ENCODE measurements at regions of chr2 and their contacts with region 1.

Region 1: GRCh38 chr2:105749583-105750400 is 5.1 kb downstream of the NCK2 start:
- DNase-seq: peak; percentile 57
- H3K4me3 Mint-ChIP-seq: peak overlapping the region; percentile 95
- H3K27ac Mint-ChIP-seq: peak overlapping the region; percentile 90
- H3K4me1 Mint-ChIP-seq: peaks cover 82% of the 10 kb centered on the region
- H3K27me3 Mint-ChIP-seq: no peaks in the 10 kb centered on the region

Region 2: GRCh38 chr2:105681927-105682326 is 67.9 kb before region 1 on chr2:
- CTCF ChIA-PET with region 1: no interaction called
- POLR2A ChIA-PET with region 1: no interaction called
- DNase-seq: no peak
- H3K4me3 Mint-ChIP-seq: no peak overlapping the region
- H3K27ac Mint-ChIP-seq: no peak overlapping the region
- H3K4me1 Mint-ChIP-seq: peaks cover 11% of the 10 kb centered on the region
- H3K27me3 Mint-ChIP-seq: peaks cover 4% of the 10 kb centered on the region

Region 3: DNA sequence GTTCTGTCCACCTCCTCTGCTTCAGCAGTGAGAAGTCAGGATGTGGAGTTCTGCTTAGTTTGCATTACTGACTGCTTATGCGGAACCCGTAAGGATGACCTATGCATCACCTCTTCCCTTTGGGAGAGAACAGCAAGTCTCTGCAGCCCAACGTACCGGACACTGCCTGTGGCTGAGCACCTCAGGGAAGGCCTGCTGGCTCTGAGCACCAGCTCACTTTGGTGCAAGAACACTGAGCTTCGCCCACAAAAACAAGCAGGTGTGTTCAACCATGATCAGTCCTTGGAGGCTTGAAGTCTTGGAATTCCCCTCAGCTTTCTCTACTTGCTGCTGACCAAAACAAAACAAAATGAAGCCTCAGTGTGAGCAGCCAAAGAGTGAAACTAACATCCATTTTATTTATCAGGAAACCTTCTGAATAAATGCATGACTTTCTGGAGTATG is 57.8 kb before region 1 on chr2:
- CTCF ChIA-PET with region 1: no interaction called
- POLR2A ChIA-PET with region 1: no interaction called
- DNase-seq: no peak
- H3K4me3 Mint-ChIP-seq: no peak overlapping the region
- H3K27ac Mint-ChIP-seq: no peak overlapping the region
- H3K4me1 Mint-ChIP-seq: no peaks in the 10 kb centered on the region
- H3K27me3 Mint-ChIP-seq: peaks cover 3% of the 10 kb centered on the region

Region 4: GRCh38 chr2:105761931-105762515 is 12.2 kb after region 1 on chr2:
- CTCF ChIA-PET with region 1: interaction called, 3 read pairs
- POLR2A ChIA-PET with region 1: interaction called, 120 read pairs
- DNase-seq: no peak
- H3K4me3 Mint-ChIP-seq: peak overlapping the region; percentile 49
- H3K27ac Mint-ChIP-seq: peak overlapping the region; percentile 60
- H3K4me1 Mint-ChIP-seq: peaks cover 90% of the 10 kb centered on the region
- H3K27me3 Mint-ChIP-seq: no peaks in the 10 kb centered on the region

Region 5: GRCh38 chr2:105769504-105769903 is 19.7 kb after region 1 on chr2:
- CTCF ChIA-PET with region 1: interaction called, 4 read pairs
- POLR2A ChIA-PET with region 1: interaction called, 120 read pairs
- DNase-seq: no peak
- H3K4me3 Mint-ChIP-seq: no peak overlapping the region
- H3K27ac Mint-ChIP-seq: peak overlapping the region; percentile 76
- H3K4me1 Mint-ChIP-seq: peaks cover 95% of the 10 kb centered on the region
- H3K27me3 Mint-ChIP-seq: no peaks in the 10 kb centered on the region

Region 6: GRCh38 chr2:105775809-105776559 is 26.2 kb after region 1 on chr2:
- CTCF ChIA-PET with region 1: interaction called, 7 read pairs
- POLR2A ChIA-PET with region 1: interaction called, 49 read pairs
- DNase-seq: peak; percentile 50
- H3K4me3 Mint-ChIP-seq: peak overlapping the region; percentile 69
- H3K27ac Mint-ChIP-seq: peak overlapping the region; percentile 92
- H3K4me1 Mint-ChIP-seq: peaks cover 92% of the 10 kb centered on the region
- H3K27me3 Mint-ChIP-seq: no peaks in the 10 kb centered on the region

Measured in activated CD4-positive, alpha-beta memory T cell treated with anti-CD3 and anti-CD28 coated beads, Interleukin-2, amount 10 ng/mL, durations not matched to agents 7 days and 5 days (primary cell).